ENCODE measurements at regions of chr18 and their contacts with region 1.

Region 1: GRCh38 chr18:46281185-46282176 is 177.3 kb downstream of the HAUS1 start:
- DNase-seq: peak; percentile 63 to 69
- ATAC-seq: peak; percentile 84 to 99 (median 97)
- H3K4me3 ChIP-seq: no peak overlapping the region
- H3K4me3 Mint-ChIP-seq: no peak overlapping the region
- H3K27ac ChIP-seq: no peak overlapping the region
- H3K27ac Mint-ChIP-seq: no peak overlapping the region
- H3K4me1 ChIP-seq: peaks cover 6% of the 10 kb centered on the region
- H3K4me1 Mint-ChIP-seq: peaks cover 7 to 16% of the 10 kb centered on the region in 2 donors
- H3K27me3 ChIP-seq: no peaks in the 10 kb centered on the region
- H3K27me3 Mint-ChIP-seq: no peaks in the 10 kb centered on the region
- CTCF ChIP-seq: peak; percentile 96

Region 2: GRCh38 chr18:46398625-46399024 is 117.1 kb after region 1 on chr18:
- intact Hi-C with region 1: loop called (anchors 5 kb)
- DNase-seq: no peak
- ATAC-seq: peak in 1 of 3 donors; percentile 10
- H3K4me3 ChIP-seq: no peak overlapping the region
- H3K4me3 Mint-ChIP-seq: peak overlapping the region; percentile 30
- H3K27ac ChIP-seq: peak overlapping the region; percentile 77
- H3K27ac Mint-ChIP-seq: peak overlapping the region; percentile 83 to 95
- H3K4me1 ChIP-seq: peaks cover 81% of the 10 kb centered on the region
- H3K4me1 Mint-ChIP-seq: peaks cover 90 to 97% of the 10 kb centered on the region in 2 donors
- H3K27me3 ChIP-seq: no peaks in the 10 kb centered on the region
- H3K27me3 Mint-ChIP-seq: no peaks in the 10 kb centered on the region
- CTCF ChIP-seq: no peak

Region 3: GRCh38 chr18:46481048-46481846 is 199.8 kb after region 1 on chr18:
- intact Hi-C with region 1: loop called (anchors 1 kb)
- DNase-seq: peak; percentile 52 to 74
- ATAC-seq: peak; percentile 50 to 80 (median 77)
- H3K4me3 ChIP-seq: no peak overlapping the region
- H3K4me3 Mint-ChIP-seq: no peak overlapping the region
- H3K27ac ChIP-seq: no peak overlapping the region
- H3K27ac Mint-ChIP-seq: no peak overlapping the region
- H3K4me1 ChIP-seq: no peaks in the 10 kb centered on the region
- H3K4me1 Mint-ChIP-seq: peaks cover 7 to 12% of the 10 kb centered on the region in 2 donors
- H3K27me3 ChIP-seq: peaks cover 3% of the 10 kb centered on the region
- H3K27me3 Mint-ChIP-seq: peaks cover 6 to 8% of the 10 kb centered on the region in 2 donors
- CTCF ChIP-seq: peak; percentile 82

Measured in natural killer cell (primary cell).